ENCODE measurements at regions of chr2 and their contacts with region 1.

Region 1: GRCh38 chr2:15560988-15561573 is at the start of gene NBAS:
- DNase-seq: peak; percentile 74 to 92 (median 86)
- H3K4me3 ChIP-seq: peak within 1 kb of the TSS; percentile 50 to 91 (median 82)
- H3K27ac ChIP-seq: peak within 1 kb of the TSS in 55 of 59 donors; percentile 30 to 89 (median 78)
- H3K27me3 ChIP-seq: no peaks in the 10 kb centered on the region
- CTCF ChIP-seq: peak in 24 of 56 donors; percentile 5 to 47 (median 22)
- total RNA-seq, gene NBAS: 54.5 to 99.1 (median 74.0) TPM

Region 2: DNA sequence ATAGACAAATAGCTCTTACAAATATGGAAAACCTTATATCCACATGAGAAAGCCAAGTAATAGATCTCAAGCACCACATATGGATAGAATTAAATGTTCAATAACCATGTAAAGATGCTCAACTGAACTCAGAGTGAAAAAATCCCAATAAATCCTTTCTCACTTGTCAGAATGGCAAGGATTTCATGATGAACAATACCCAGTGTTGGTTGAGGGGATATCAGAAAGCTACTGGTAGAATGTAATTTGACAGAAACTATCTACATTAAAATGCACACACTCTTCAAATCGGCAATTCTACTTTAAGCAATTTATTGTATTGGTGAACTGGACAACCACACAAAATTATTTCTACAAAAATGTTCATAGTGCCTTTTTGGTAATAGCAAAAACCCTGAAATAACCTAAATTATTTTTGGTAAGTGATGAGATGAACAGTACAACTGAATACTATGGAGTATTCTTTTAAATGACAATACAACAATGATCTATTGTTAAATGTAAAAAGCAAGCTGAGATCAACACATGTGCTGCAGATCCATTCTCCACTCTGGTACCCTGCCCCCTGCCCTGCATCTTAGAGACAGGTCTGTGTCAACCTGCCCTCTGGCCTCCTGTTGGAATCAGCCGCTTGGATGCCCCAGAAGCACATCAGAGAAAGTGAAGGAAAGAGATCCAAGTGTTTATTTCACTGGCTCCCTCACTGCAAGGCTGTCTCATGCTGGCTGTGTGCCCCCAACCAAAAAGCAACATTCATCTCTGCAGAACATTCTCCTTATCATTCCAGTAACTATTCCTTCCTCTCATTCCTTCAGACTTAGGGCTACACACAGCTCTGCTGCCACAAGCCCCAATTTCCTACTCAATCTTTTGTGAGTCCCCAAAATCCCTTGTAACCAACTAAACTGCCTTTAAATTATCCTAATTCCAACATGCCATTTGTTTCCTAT is 486.1 kb before region 1 on chr2:
- intact Hi-C with region 1: loop called in 1 of 2 experiments (anchors 10 kb)
- DNase-seq: peak in 3 of 10 donors; percentile 9 to 49 (median 42)
- H3K4me3 ChIP-seq: peak overlapping the region in 10 of 59 donors; percentile 2 to 33 (median 12)
- H3K27ac ChIP-seq: peak overlapping the region; percentile 46 to 98 (median 87)
- H3K27me3 ChIP-seq: no peaks in the 10 kb centered on the region
- CTCF ChIP-seq: peak in 3 of 56 donors; percentile 8 to 13 (median 9)

Region 3: DNA sequence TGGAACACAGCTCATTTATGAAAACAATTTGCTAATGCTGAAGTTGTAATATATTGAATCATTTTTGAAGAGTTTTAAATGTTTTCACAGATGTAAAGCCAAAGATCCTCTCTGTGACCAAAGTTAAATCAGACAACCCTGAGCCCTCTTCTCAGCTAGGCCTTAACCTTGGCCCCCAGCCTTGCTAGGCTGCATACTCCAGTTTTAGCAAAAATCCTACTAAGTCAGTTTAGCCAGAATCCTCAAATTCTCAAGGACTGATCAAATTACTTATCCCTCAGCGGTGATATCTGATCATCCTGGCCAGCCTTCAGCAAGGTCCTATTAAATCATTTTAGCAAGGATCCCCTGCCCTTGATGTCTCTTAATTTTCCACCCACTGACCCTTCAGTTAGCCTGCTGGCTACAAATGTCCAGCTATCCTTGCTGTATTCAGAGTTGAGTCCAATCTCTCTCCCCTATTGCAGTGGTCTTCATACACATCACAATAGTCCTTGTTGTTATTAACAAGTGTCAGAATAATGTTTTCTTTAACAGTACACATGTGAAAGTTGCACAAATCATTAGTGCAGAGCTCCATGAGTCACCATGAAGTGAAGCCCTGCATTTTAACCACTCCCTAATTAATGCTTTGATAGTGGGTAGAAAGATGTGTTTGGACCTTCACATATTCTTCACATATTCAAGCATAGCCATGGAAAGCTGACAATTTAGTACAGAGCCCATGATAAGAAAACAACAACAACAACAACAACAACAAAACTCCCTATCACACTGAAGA is 206.3 kb before region 1 on chr2:
- intact Hi-C with region 1: no loop called
- DNase-seq: no peak
- H3K4me3 ChIP-seq: no peak overlapping the region
- H3K27ac ChIP-seq: no peak overlapping the region
- H3K27me3 ChIP-seq: no peaks in the 10 kb centered on the region
- CTCF ChIP-seq: no peak

Region 4: DNA sequence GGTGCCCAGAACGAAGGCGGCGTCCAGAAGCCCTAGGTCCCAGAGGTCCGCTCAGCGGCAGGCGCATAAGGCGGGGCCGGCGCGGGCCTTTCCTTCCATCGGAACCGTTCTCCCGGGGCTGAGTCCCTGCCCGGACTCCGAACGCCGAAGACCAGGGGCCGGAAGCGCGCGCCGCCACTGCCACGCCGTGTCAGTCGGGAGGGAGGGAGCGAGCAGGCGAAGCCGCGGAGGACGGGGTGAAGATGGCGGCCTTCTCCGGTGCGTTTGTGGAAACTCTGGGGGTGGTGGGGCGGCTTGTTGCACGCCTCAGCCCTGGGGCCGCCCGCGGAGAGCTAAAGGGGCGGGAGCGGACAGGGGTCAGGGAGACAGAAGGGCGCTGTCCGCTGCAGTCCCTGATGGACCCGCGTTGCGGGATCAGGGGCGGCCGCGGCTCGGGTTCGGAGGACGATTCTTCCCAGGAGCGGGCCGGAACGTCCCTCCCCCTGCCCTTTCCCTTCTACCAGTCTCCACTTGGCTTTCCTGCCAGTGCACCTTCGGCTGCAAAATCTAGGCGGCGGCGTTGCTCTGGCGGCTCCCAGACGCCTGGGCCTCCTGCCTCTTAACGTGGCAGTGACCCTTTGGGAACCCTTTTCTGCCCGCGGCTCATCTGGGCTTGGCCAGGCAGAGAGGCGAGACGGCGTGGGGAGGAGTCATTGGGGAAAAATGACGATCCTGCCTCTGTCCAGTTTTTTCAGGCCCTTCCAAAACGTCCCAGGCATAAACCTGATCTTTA is 30.8 kb after region 1 on chr2 and contains the start of gene DDX1:
- intact Hi-C with region 1: loop called (anchors 1 kb)
- DNase-seq: peak; percentile 67 to 92 (median 82)
- H3K4me3 ChIP-seq: peak within 1 kb of the TSS; percentile 60 to 99 (median 92)
- H3K27ac ChIP-seq: peak within 1 kb of the TSS in 58 of 59 donors; percentile 71 to 97 (median 91)
- H3K27me3 ChIP-seq: no peaks in the 10 kb centered on the region
- CTCF ChIP-seq: peak in 41 of 56 donors; percentile 8 to 63 (median 31)
- total RNA-seq, gene DDX1: 55.0 to 151 (median 117) TPM

Measured in dorsolateral prefrontal cortex (tissue), 120 donors.